ENCODE measurements at regions of chr13 and their contacts with region 1.

Region 1: GRCh38 chr13:100588331-100589177 is at the start of gene GGACT:
- DNase-seq: peak; percentile 80
- ATAC-seq: peak; percentile 95
- H3K4me3 Mint-ChIP-seq: peak within 1 kb of the TSS; percentile 80
- H3K27ac Mint-ChIP-seq: peak within 1 kb of the TSS; percentile 65
- H3K4me1 Mint-ChIP-seq: peaks cover 14% of the 10 kb centered on the region
- H3K27me3 Mint-ChIP-seq: no peaks in the 10 kb centered on the region
- CTCF ChIP-seq: no peak
- total RNA-seq, gene GGACT: 6.5 and 7.5 TPM in 2 replicates

Region 2: DNA sequence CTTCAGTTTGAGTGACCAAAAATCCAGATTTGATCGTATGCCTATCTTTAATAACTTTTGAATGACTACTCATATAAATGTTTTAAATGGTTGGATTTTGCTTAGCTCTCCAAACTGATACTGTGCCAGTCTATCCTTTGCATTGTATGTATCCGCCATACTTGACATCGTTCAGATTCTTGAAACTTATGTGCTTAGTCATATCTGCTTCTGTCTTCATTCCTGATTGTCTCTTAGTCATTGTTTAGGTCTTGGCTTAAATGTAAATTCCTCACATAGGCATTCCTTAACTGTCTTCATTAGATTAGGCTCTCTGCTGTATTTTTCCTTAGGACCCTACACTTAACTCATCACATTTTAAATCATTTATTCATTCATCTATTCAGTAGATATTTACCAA is 373.7 kb before region 1 on chr13:
- CTCF ChIA-PET with region 1: no interaction called
- POLR2A ChIA-PET with region 1: no interaction called
- intact Hi-C with region 1: no loop called
- DNase-seq: no peak
- ATAC-seq: no peak
- H3K4me3 Mint-ChIP-seq: no peak overlapping the region
- H3K27ac Mint-ChIP-seq: no peak overlapping the region
- H3K4me1 Mint-ChIP-seq: peaks cover 16% of the 10 kb centered on the region
- H3K27me3 Mint-ChIP-seq: no peaks in the 10 kb centered on the region
- CTCF ChIP-seq: no peak

Region 3: DNA sequence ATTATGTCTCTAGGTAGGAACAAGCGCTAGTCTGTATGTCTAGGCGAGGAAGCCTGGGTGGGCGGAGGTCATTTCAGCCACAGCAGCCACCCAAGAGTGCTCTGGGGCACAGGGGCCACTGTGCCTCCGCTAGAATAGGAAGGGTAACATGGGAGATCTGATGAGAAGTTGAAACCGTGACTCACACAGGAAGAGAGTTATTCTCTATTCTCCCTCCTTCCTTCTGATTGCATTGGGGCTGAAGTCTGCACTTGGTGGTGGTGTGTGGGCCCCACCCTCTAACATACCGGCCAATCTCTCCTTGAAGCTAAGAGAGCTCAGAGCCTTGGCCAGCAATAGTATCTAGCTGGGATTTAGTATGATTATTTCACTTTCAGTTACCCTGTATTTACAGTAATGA is 20.4 kb after region 1 on chr13:
- CTCF ChIA-PET with region 1: interaction called, 3 read pairs
- POLR2A ChIA-PET with region 1: interaction called, 11 read pairs
- intact Hi-C with region 1: loop called (anchors 1 kb)
- DNase-seq: no peak
- ATAC-seq: peak; percentile 77
- H3K4me3 Mint-ChIP-seq: peak overlapping the region; percentile 32
- H3K27ac Mint-ChIP-seq: peak overlapping the region; percentile 78
- H3K4me1 Mint-ChIP-seq: peaks cover 50% of the 10 kb centered on the region
- H3K27me3 Mint-ChIP-seq: no peaks in the 10 kb centered on the region
- CTCF ChIP-seq: no peak

Region 4: GRCh38 chr13:102394158-102395053 is 1805.9 kb after region 1 on chr13:
- CTCF ChIA-PET with region 1: no interaction called
- POLR2A ChIA-PET with region 1: no interaction called
- intact Hi-C with region 1: loop called (anchors 10 kb)
- DNase-seq: peak; percentile 88
- ATAC-seq: peak; percentile 94
- H3K4me3 Mint-ChIP-seq: peak overlapping the region; percentile 87
- H3K27ac Mint-ChIP-seq: peak overlapping the region; percentile 56
- H3K4me1 Mint-ChIP-seq: peaks cover 8% of the 10 kb centered on the region
- H3K27me3 Mint-ChIP-seq: peaks cover 16% of the 10 kb centered on the region
- CTCF ChIP-seq: no peak